ENCODE measurements at regions of chr17 and their contacts with region 1.

Region 1: DNA sequence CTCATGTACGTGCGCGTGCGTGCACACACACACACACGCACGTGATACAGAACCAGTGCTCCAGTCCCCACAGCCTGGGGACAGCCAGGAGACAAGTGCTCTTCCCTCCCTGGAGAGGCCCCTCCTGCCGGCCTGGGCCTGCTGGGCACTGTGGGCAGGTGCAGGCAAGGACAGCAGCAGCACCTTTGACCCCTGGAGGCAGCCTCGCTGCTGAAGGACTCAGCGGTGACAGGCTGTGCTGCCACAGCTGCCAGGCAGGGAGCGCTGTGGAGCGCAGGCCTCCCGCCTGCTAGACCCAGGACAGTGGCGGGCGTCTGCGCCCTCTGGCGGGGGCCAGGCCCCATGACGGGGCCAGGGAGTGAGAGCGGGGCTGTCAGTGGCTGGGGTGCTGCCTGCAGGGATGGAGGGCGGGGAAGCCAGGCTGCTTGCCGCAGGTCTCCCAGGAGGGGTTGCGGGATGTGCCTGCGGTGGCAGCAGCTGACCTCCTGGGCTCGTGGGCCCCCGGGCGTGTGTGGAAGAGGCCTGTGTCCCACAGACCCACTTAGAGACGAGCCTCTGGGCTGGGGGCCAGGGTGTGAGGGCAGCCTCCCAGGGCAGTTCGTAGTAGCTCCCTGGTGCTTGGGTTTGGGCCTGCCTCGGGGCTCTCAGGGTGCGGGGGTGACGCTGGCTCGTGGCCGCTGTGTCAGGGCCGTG is 63.5 kb upstream of the PVALEF start:
- DNase-seq: peak; percentile 91
- ATAC-seq: peak; percentile 88
- H3K4me3 ChIP-seq: no peak overlapping the region
- H3K27ac ChIP-seq: no peak overlapping the region
- H3K4me1 ChIP-seq: peaks cover 25% of the 10 kb centered on the region
- H3K27me3 ChIP-seq: no peaks in the 10 kb centered on the region
- CTCF ChIP-seq: peak; percentile 100
- EP300 ChIP-seq: peak; percentile 41 to 69; a peak in 2 of 4 replicates
- POLR2A ChIP-seq: no peak
- RAD21 ChIP-seq: peak; percentile 100

Region 2: GRCh38 chr17:80991645-80992076 is 110.1 kb before region 1 on chr17 and contains the start of gene CHMP6:
- CTCF ChIA-PET with region 1: interaction called, 39 read pairs
- POLR2A ChIA-PET with region 1: interaction called, 5 read pairs
- in situ Hi-C with region 1: loop called (anchors 5 kb)
- intact Hi-C with region 1: loop called (anchors 1 kb)
- DNase-seq: peak; percentile 60
- ATAC-seq: peak; percentile 13
- H3K4me3 ChIP-seq: peak within 1 kb of the TSS; percentile 87 to 95 (median 95)
- H3K27ac ChIP-seq: peak within 1 kb of the TSS; percentile 49
- H3K4me1 ChIP-seq: peaks cover 63% of the 10 kb centered on the region
- H3K27me3 ChIP-seq: peaks cover 3 to 30% of the 10 kb centered on the region in 2 experiments; a peak in 4 of 5 replicates
- CTCF ChIP-seq: peak; percentile 38; the same call in 1 of the 2 replicates
- EP300 ChIP-seq: peak in 1 of 2 experiments; percentile 46; a peak in 1 of 4 replicates
- POLR2A ChIP-seq: peak; percentile 46 to 55; a peak in 2 of 4 replicates
- RAD21 ChIP-seq: peak; percentile 54
- total RNA-seq, gene CHMP6: 24.2 and 24.6 TPM in 2 replicates

Region 3: GRCh38 chr17:81008141-81008540 is 93.6 kb before region 1 on chr17:
- CTCF ChIA-PET with region 1: no interaction called
- POLR2A ChIA-PET with region 1: no interaction called
- in situ Hi-C with region 1: no loop called
- intact Hi-C with region 1: no loop called
- DNase-seq: no peak
- ATAC-seq: no peak
- H3K4me3 ChIP-seq: no peak overlapping the region
- H3K27ac ChIP-seq: no peak overlapping the region
- H3K4me1 ChIP-seq: peaks cover 34% of the 10 kb centered on the region
- H3K27me3 ChIP-seq: peaks cover 8 to 70% of the 10 kb centered on the region in 2 experiments; a peak in 4 of 5 replicates
- CTCF ChIP-seq: no peak
- EP300 ChIP-seq: no peak
- POLR2A ChIP-seq: no peak
- RAD21 ChIP-seq: no peak

Region 4: GRCh38 chr17:81018044-81018802 is 83.5 kb before region 1 on chr17:
- CTCF ChIA-PET with region 1: interaction called, 83 read pairs
- POLR2A ChIA-PET with region 1: no interaction called
- in situ Hi-C with region 1: no loop called
- intact Hi-C with region 1: loop called (anchors 1 kb)
- DNase-seq: no peak
- ATAC-seq: peak; percentile 61
- H3K4me3 ChIP-seq: peak overlapping the region; percentile 34 to 71 (median 47)
- H3K27ac ChIP-seq: no peak overlapping the region
- H3K4me1 ChIP-seq: peaks cover 56% of the 10 kb centered on the region
- H3K27me3 ChIP-seq: peaks cover 1 to 38% of the 10 kb centered on the region in 2 experiments; a peak in 3 of 5 replicates
- CTCF ChIP-seq: no peak
- EP300 ChIP-seq: no peak
- POLR2A ChIP-seq: no peak
- RAD21 ChIP-seq: no peak

Region 5: DNA sequence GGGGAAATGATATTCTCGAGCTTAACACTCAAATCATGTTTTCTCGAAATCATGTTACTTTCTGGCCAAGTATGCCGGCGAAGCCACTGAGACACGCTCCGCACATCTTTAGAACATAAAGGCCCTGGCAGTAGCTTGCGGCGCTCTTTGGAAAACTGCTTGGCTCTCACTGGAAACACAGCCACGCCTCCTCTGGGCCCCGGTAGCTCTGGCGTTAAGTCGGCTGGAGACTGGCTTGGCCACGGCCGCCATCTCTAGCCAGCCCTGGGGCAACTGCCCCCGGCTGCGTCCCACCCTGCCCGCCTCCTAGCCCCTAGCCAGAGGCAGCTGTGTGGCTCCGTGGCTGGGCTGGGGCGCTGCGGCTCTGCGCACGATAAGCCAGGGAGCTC is 76.0 kb before region 1 on chr17:
- CTCF ChIA-PET with region 1: interaction called, 83 read pairs
- POLR2A ChIA-PET with region 1: interaction called, 3 read pairs
- in situ Hi-C with region 1: no loop called
- intact Hi-C with region 1: loop called (anchors 1 kb)
- DNase-seq: no peak
- ATAC-seq: no peak
- H3K4me3 ChIP-seq: peak overlapping the region in 1 of 3 experiments; percentile 14; a peak in 1 of 6 replicates
- H3K27ac ChIP-seq: no peak overlapping the region
- H3K4me1 ChIP-seq: peaks cover 77% of the 10 kb centered on the region
- H3K27me3 ChIP-seq: peaks cover 19 to 53% of the 10 kb centered on the region in 2 experiments; a peak in 4 of 5 replicates
- CTCF ChIP-seq: no peak
- EP300 ChIP-seq: no peak
- POLR2A ChIP-seq: no peak
- RAD21 ChIP-seq: no peak

Measured in HepG2 (cell line).